Esophagus muscularis mucosa (tissue), 4 donors: ENCODE measurements at regions of chr6 and their contacts with region 1.

Region 1: DNA sequence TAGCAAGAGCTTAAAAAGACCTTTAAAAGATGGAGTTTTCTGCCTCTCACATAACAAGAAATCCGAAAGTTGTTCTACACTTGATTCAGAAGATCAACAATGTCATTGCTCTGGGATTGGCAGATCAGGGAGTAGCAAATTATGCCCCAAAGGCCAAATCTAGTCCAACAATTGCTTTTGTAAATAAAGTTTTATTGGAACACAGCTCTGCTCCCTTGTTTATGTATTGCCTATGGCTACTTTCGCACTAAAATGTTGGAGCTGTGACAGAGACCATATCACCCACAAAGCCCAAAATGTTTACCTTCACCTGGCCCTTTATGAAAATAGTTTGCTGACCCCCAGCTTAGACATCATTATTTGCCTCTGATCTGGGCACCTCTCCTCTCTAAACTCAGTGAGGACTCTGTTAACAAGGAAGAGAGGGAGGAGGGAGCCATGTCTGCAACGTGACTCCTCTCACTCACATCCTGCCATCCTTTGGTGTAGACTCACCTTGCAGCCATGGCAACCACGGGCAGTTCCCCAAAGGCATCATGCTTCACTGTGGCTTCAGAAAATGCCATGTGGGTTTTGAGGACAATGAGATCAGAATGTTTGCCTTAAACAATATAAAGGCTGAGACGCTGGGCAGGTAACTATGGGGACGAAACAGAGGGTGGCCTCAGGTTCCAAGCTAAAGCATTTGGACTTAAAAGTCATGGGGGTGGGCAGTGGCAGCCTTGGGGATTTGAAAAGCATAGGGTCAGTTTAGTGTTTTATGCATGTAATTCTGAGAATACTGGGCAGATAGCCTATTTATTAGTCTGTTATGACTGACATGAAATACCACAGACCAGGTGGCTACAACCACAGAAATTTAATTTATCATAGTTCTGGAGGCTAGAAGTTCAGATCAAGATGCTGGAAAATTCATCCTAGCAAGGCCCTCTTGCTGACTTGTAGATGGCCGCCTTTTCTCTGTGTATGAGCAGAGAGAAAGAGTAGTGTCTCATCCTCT is 149.7 kb upstream of the TNFAIP3 start:
- DNase-seq: no peak
- H3K4me3 ChIP-seq: no peak overlapping the region
- H3K27ac ChIP-seq: no peak overlapping the region
- H3K4me1 ChIP-seq: peaks cover 0 to 5% (median under 1%) of the 10 kb centered on the region in 4 donors
- H3K27me3 ChIP-seq: no peaks in the 10 kb centered on the region
- CTCF ChIP-seq: no peak
- EP300 ChIP-seq: no peak
- POLR2A ChIP-seq: no peak

Region 2: GRCh38 chr6:137631323-137631722 is 86.1 kb before region 1 on chr6:
- intact Hi-C with region 1: no loop called
- DNase-seq: no peak
- H3K4me3 ChIP-seq: no peak overlapping the region
- H3K27ac ChIP-seq: no peak overlapping the region
- H3K4me1 ChIP-seq: peaks cover 0 to 13% (median 4%) of the 10 kb centered on the region in 4 donors
- H3K27me3 ChIP-seq: no peaks in the 10 kb centered on the region
- CTCF ChIP-seq: no peak
- EP300 ChIP-seq: no peak
- POLR2A ChIP-seq: no peak

Region 3: GRCh38 chr6:137776786-137777686 is 59.7 kb after region 1 on chr6:
- intact Hi-C with region 1: loop called (anchors 10 kb)
- DNase-seq: peak; percentile 92
- H3K4me3 ChIP-seq: peak overlapping the region in 2 of 4 donors; percentile 5 to 17
- H3K27ac ChIP-seq: peak overlapping the region; percentile 81 to 91 (median 88)
- H3K4me1 ChIP-seq: peaks cover 14 to 90% (median 79%) of the 10 kb centered on the region in 4 donors
- H3K27me3 ChIP-seq: no peaks in the 10 kb centered on the region
- CTCF ChIP-seq: peak in 1 of 3 experiments; percentile 22
- EP300 ChIP-seq: peak; percentile 81
- POLR2A ChIP-seq: no peak